ENCODE measurements at regions of chr6 and their contacts with region 1.

Region 1: DNA sequence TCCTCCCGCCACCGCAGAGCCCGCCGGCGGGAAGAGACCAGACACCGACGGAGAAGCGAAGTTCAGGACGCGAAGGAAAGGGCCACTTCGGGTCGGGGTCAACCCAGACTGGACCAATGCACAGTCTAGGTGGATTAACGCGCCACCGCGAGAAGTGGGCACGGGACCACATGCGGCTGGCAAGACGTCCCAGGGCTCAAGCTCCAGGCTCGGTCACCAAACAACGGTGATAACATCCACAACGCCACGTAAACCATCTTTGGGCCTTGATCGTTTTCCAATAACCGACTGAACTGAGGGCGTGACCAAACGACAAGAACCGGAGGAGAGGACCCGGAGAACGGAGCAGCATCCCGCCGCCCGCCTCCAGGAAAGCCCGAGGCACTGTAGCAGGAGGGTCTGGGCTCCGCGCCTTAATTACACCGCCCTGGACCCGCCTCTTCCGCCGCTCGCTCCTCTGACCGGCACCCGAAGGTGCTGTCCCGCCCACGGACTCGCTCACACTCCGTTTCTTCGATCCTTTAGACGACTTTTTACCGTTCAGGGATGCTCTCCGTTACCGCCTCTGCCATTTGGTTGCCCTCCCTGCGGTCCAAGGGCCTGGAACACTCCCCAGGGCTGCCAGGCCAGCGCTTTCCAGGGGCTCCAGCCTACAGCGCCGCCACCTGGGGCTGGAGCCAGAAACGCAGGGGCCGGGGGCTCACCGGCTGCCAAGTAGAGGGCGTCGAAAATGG is 44.1 kb downstream of the DPPA5 start:
- DNase-seq: peak; percentile 63
- H3K4me3 Mint-ChIP-seq: peak overlapping the region; percentile 83
- H3K27ac Mint-ChIP-seq: no peak overlapping the region
- H3K4me1 Mint-ChIP-seq: peaks cover 19% of the 10 kb centered on the region
- H3K27me3 Mint-ChIP-seq: peaks cover 53% of the 10 kb centered on the region

Region 2: DNA sequence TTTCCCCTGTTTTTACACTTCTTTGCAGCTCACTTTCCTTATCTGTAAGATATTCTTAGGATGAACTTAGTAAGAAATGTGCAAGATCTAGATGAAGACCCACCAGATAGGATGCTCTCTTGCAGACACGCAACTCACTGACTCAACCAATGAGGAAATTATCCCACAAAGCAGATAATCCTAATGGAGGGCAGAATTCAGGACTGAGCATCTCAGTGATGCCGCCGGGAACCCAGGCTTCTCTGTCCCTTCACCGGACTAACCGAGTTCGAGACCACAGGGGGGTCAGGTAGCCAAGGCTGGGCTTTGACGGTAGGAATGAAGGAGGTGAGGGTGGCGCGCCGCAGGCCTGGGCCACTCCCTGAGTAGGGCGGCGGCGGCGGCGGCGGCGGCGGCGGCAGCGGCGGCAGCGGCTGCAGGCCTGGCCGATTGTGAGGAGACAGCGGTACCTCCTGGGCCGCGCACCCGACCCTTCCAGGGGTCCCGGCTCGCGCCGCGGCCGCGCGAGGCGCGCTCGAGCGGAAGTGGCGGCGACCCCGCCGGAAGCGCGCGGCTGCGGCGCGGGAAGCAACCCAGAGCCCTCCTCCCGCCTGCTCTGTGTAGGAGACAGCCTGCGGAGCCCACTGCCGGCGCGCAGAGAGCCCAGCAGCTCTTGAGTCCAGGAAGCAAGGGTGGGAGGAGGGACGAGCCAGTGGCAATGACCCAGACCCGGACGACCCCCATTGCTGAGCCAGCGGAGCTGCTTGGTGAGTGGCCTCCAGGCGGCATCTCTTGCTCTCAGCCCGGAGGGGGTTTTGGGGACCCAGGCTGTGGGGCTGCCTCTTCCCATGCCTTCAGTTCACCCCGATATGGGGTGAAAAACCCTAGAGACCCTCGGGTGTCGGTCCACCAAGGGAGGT is 47.0 kb before region 1 on chr6 and contains the start of gene KHDC1:
- CTCF ChIA-PET with region 1: no interaction called
- intact Hi-C with region 1: loop called (anchors 1 kb)
- DNase-seq: peak; percentile 65
- H3K4me3 Mint-ChIP-seq: peak within 1 kb of the TSS; percentile 80
- H3K27ac Mint-ChIP-seq: peak within 1 kb of the TSS; percentile 56
- H3K4me1 Mint-ChIP-seq: peaks cover 30% of the 10 kb centered on the region
- H3K27me3 Mint-ChIP-seq: no peaks in the 10 kb centered on the region
- total RNA-seq, gene KHDC1: 1.1 to 1.6 TPM